T-cell (primary cell): ENCODE measurements at regions of chr4 and their contacts with region 1.

Region 1: GRCh38 chr4:153083447-153083947 is 120.7 kb upstream of the TRIM2 start:
- DNase-seq: peak in 29 of 35 experiments; percentile 14 to 81 (median 35)
- ATAC-seq: peak; percentile 53 to 59 (median 59)
- H3K4me3 ChIP-seq: no peak overlapping the region
- H3K4me3 Mint-ChIP-seq: peak overlapping the region in 1 of 3 donors; percentile 31
- H3K27ac ChIP-seq: no peak overlapping the region
- H3K27ac Mint-ChIP-seq: peak overlapping the region in 1 of 2 donors; percentile 86
- H3K4me1 ChIP-seq: peaks cover 0 to 55% of the 10 kb centered on the region in 2 experiments
- H3K4me1 Mint-ChIP-seq: peaks cover 50 to 64% (median 54%) of the 10 kb centered on the region in 3 donors
- H3K27me3 ChIP-seq: peaks cover 0 to 8% of the 10 kb centered on the region in 2 experiments
- H3K27me3 Mint-ChIP-seq: no peaks in the 10 kb centered on the region

Region 2: DNA sequence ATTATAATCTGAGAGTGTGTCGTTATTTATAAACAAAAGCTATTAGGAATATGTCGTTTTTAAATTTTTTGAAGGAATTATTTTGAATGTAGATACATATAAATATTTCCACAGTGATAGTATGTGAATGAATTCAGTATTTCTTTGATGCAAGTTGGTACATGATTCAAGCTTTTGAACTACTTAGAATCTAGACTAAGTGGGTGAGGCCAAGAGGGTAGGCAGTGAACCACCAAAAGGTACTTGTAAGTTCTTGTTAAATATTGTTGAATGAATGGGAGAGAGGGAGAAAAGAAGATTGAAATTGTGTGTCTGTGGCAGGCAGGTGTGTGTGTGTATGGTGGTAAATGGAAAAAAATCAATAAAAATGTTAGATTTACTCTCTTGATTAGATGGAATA is 234.1 kb before region 1 on chr4:
- CTCF ChIA-PET with region 1: interaction called, 5 to 10 read pairs
- POLR2A ChIA-PET with region 1: no interaction called
- DNase-seq: no peak
- ATAC-seq: no peak
- H3K4me3 ChIP-seq: no peak overlapping the region
- H3K4me3 Mint-ChIP-seq: no peak overlapping the region
- H3K27ac ChIP-seq: no peak overlapping the region
- H3K27ac Mint-ChIP-seq: no peak overlapping the region
- H3K4me1 ChIP-seq: peaks cover 3 to 11% of the 10 kb centered on the region in 2 experiments
- H3K4me1 Mint-ChIP-seq: peaks cover 17 to 22% (median 20%) of the 10 kb centered on the region in 3 donors
- H3K27me3 ChIP-seq: no peaks in the 10 kb centered on the region
- H3K27me3 Mint-ChIP-seq: no peaks in the 10 kb centered on the region

Region 3: GRCh38 chr4:153115322-153116290 is 32.1 kb after region 1 on chr4:
- CTCF ChIA-PET with region 1: interaction called, 11 to 24 read pairs
- POLR2A ChIA-PET with region 1: no interaction called
- DNase-seq: peak; percentile 36 to 88 (median 68)
- ATAC-seq: peak; percentile 63 to 76 (median 74)
- H3K4me3 ChIP-seq: peak overlapping the region; percentile 7 to 8
- H3K4me3 Mint-ChIP-seq: peak overlapping the region in 2 of 3 donors; percentile 65 to 72
- H3K27ac ChIP-seq: peak overlapping the region; percentile 88
- H3K27ac Mint-ChIP-seq: no peak overlapping the region
- H3K4me1 ChIP-seq: peaks cover 43 to 66% of the 10 kb centered on the region in 2 experiments
- H3K4me1 Mint-ChIP-seq: peaks cover 0 to 8% (median 1%) of the 10 kb centered on the region in 3 donors
- H3K27me3 ChIP-seq: no peaks in the 10 kb centered on the region
- H3K27me3 Mint-ChIP-seq: no peaks in the 10 kb centered on the region

Region 4: DNA sequence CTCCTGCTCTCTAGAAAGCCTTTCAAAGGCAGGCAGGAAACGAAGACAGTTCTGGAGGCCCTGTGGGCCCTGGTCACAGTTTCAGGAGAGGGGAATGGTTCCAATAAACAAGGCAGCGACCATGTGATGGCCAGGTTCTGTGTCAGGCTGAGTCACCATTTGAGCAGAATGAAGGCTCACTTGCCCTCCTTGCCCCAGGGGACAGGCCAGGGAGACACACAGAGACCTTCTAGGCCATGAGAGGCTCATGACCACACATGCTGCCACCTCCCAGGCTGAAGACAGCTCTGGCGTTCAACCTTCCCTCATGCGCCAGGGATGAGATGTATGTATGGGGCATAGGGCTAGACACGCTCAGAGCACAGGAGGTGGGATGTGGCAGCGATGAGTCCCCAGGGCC is 97.8 kb after region 1 on chr4:
- CTCF ChIA-PET with region 1: no interaction called
- POLR2A ChIA-PET with region 1: no interaction called
- DNase-seq: no peak
- ATAC-seq: no peak
- H3K4me3 ChIP-seq: no peak overlapping the region
- H3K4me3 Mint-ChIP-seq: no peak overlapping the region
- H3K27ac ChIP-seq: no peak overlapping the region
- H3K27ac Mint-ChIP-seq: no peak overlapping the region
- H3K4me1 ChIP-seq: no peaks in the 10 kb centered on the region
- H3K4me1 Mint-ChIP-seq: peaks cover 0 to 4% (median 0%) of the 10 kb centered on the region in 3 donors
- H3K27me3 ChIP-seq: peaks cover 0 to 3% of the 10 kb centered on the region in 2 experiments
- H3K27me3 Mint-ChIP-seq: no peaks in the 10 kb centered on the region

Region 5: DNA sequence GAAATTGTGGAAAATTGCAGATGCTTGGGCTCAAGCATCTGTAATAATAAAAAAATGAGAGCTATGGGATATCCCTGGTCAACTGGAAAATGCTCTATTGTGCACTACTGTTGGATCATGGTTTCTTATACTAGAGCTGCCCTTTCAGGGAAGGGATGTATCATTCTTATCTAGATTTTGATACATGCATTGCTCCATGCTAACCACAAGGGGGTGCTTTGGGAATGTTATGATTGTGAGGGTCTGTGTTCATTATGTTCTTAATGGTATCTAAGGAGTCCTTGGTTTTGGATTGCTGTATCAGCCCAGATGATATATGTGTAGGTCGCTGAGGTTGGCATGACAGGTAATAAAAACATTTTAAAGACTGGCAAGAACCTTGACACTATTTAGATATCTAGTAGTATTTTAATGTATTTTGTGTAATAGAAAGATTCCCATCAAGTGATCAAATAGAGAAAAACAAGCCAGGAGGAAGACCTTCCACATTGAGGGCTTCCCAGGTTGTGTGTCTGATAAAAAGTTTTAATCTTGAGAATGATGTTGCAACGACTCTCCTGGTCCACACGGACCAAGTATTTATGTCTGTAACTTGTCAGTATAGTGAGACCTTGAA is 551.3 kb after region 1 on chr4:
- CTCF ChIA-PET with region 1: interaction called in 1 of 2 experiments, 10 read pairs
- POLR2A ChIA-PET with region 1: no interaction called
- DNase-seq: peak in 1 of 35 experiments; percentile 44
- ATAC-seq: peak in 2 of 4 experiments; percentile 41 to 44
- H3K4me3 ChIP-seq: no peak overlapping the region
- H3K4me3 Mint-ChIP-seq: no peak overlapping the region
- H3K27ac ChIP-seq: no peak overlapping the region
- H3K27ac Mint-ChIP-seq: peak overlapping the region in 1 of 2 donors; percentile 34
- H3K4me1 ChIP-seq: no peaks in the 10 kb centered on the region
- H3K4me1 Mint-ChIP-seq: peaks cover 0 to 4% (median 0%) of the 10 kb centered on the region in 3 donors
- H3K27me3 ChIP-seq: no peaks in the 10 kb centered on the region
- H3K27me3 Mint-ChIP-seq: no peaks in the 10 kb centered on the region